Right lobe of liver (tissue), 6 donors: ENCODE measurements at regions of chr21 and their contacts with region 1.

Region 1: GRCh38 chr21:34745557-34746255 is 76.9 kb downstream of the CLIC6 start:
- DNase-seq: peak; percentile 66 to 71 (median 66)
- ATAC-seq: peak; percentile 94 to 98 (median 96)
- H3K4me3 ChIP-seq: peak overlapping the region in 1 of 3 donors; percentile 11
- H3K27ac ChIP-seq: no peak overlapping the region
- H3K4me1 ChIP-seq: no peaks in the 10 kb centered on the region
- H3K27me3 ChIP-seq: no peaks in the 10 kb centered on the region
- CTCF ChIP-seq: peak; percentile 85 to 96 (median 87)
- POLR2A ChIP-seq: no peak

Region 2: GRCh38 chr21:34845521-34846451 is 100.1 kb after region 1 on chr21:
- intact Hi-C with region 1: no loop called
- DNase-seq: no peak
- ATAC-seq: peak in 3 of 4 donors; percentile 22 to 33 (median 24)
- H3K4me3 ChIP-seq: no peak overlapping the region
- H3K27ac ChIP-seq: no peak overlapping the region
- H3K4me1 ChIP-seq: peaks cover 0 to 3% (median 0%) of the 10 kb centered on the region in 4 donors
- H3K27me3 ChIP-seq: no peaks in the 10 kb centered on the region
- CTCF ChIP-seq: no peak
- POLR2A ChIP-seq: peak; percentile 8

Region 3: DNA sequence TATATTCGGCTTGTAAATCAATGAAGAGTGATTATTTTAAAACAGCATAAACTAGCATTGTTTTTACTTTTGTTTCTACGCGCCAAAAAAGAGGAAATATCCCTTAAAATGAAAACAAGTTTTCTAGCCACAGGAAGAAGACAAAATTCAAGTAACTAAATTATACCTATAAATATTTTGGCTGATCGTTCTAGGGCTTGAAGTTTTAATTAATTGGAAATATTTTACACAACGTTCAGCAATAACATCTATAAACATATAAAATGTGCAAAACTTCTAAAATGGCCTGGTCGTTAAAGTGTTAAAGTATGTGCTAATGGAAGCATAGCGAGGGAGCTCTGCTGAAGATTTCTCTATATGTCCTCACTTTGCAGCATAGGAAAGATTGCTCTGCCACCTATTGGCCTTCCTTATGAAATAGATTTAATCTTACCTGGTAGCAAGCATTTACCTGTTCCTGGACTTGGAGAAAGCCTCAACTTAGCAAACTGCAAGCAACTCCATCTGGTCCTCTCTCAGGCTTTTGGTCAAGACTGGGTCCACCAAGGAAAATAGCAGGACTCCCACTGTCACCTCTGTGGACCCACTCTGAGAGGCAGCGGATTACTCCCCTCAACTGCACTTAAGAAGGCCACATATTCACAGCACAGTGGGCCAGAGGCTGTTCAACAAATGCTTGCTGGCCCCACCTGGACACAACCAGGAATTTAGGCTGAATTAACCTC is 654.7 kb after region 1 on chr21:
- intact Hi-C with region 1: loop called in 1 of 2 experiments (anchors 10 kb)
- DNase-seq: no peak
- ATAC-seq: peak; percentile 87 to 97 (median 91)
- H3K4me3 ChIP-seq: no peak overlapping the region
- H3K27ac ChIP-seq: no peak overlapping the region
- H3K4me1 ChIP-seq: no peaks in the 10 kb centered on the region
- H3K27me3 ChIP-seq: no peaks in the 10 kb centered on the region
- CTCF ChIP-seq: peak; percentile 34 to 72 (median 54)
- POLR2A ChIP-seq: no peak